ENCODE measurements at regions of chrX and their contacts with region 1.

Region 1: DNA sequence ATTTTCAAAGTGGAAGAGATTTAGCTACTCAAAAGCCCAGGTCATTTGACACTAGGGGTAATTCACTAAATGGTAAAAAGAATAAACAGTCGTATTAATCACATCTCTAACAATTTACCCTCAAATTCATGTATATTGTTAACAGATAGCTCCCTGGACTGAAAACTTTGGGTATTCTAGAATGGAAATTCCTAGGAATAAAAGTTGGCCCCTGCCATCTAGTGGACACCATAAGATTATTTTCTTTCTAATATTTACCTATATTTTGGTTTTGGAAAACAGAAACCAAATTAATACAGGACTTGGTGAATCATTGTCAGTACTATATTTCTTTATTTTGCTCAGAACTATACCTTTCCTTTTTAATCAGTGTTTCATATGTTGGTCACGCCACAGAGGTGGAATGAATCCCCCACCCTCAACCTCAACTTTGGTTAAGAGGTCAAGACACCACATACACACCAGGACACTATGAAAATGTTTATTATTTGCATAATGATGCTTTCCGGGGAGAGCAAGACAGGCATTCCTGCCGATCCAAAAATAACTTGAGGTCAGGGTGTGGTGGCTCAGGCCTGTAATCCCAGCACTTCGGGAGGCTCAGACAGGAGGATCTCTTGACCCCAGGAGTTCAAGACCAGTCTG is 96.2 kb upstream of the APOOL start:
- DNase-seq: no peak

Region 2: DNA sequence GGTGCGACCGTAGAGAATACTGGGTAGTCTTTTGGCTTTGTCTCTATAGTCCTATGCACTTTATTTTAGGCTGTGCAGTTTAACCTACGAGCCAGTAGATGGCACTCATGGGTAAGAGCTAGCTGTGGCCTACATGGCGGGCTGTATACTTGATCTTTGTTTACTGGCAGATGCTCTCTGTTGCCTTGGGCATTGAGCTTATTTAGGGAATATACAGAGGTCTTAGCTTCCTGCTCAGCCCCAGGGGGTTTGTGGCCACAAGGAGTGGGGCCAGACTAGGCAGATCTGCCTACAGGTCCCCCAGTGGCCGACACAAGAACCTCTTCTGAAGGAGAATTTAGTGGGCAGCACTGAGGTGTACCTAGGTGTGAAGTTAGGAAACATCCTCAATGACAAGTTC is 177.6 kb before region 1 on chrX:
- intact Hi-C with region 1: loop called in 1 of 2 experiments (anchors 10 kb)
- DNase-seq: no peak

Region 3: GRCh38 chrX:84865113-84865512 is 42.3 kb before region 1 on chrX:
- intact Hi-C with region 1: no loop called
- DNase-seq: no peak

Measured in posterior vena cava (tissue), 2 donors.